Activated CD8-positive, alpha-beta memory T cell treated with anti-CD3 and anti-CD28 coated beads, Interleukin-2, amount 10 ng/mL, durations not matched to agents 7 days and 5 days (primary cell): ENCODE measurements at regions of chr18 and their contacts with region 1.

Region 1: GRCh38 chr18:56650944-56651770 is at the start of gene WDR7:
- DNase-seq: peak; percentile 98
- ATAC-seq: peak; percentile 92
- H3K4me3 Mint-ChIP-seq: peak within 1 kb of the TSS; percentile 90
- H3K27ac Mint-ChIP-seq: peak within 1 kb of the TSS; percentile 92
- H3K4me1 Mint-ChIP-seq: peaks cover 73% of the 10 kb centered on the region
- H3K27me3 Mint-ChIP-seq: no peaks in the 10 kb centered on the region
- total RNA-seq, gene WDR7: 35.9 to 43.3 TPM

Region 2: DNA sequence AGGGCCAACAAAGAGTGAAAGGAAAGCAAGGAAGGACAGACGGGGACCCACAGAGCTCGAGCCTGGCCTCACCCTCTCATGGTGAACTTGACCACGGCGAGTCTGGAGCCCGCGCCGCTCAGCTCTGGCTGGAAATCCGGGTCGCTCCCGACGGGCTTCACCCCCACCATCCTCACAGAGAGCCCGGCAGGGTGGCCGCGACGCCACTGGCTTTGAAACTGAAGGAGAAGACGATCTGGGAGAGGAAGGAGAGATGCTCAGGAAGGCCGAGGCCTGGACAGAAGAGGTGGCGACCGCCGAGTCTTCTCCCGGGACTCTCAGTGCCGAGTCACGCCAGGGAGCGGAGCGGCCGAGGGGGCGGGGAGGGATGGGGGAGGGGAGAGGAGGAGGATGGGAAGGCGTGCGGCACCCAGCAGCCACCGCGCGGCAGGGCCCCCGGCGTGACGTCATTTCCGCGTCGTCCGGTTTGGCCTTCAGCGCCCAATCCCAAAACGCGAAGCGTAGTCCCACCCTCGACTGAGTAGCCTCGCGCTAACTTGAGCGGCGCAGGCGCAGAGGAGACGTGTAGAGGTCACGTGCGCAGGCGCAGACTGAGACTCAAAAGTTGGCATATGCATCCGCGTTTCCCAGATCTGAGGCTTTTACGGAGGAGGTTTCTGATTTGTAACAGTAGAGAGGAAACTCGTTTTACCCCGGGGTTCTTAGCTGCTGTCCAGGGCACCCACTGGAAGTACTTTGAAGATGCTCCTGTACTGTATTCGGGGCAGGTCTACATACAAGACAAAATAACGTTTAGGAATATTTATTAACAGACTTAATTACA is 12.7 kb before region 1 on chr18 and contains the start of gene TXNL1:
- CTCF ChIA-PET with region 1: interaction called, 16 read pairs
- DNase-seq: peak; percentile 99
- ATAC-seq: peak; percentile 97
- H3K4me3 Mint-ChIP-seq: peak within 1 kb of the TSS; percentile 97
- H3K27ac Mint-ChIP-seq: peak within 1 kb of the TSS; percentile 94
- H3K4me1 Mint-ChIP-seq: peaks cover 39% of the 10 kb centered on the region
- H3K27me3 Mint-ChIP-seq: no peaks in the 10 kb centered on the region
- total RNA-seq, gene TXNL1: 42.5 to 61.2 TPM

Region 3: DNA sequence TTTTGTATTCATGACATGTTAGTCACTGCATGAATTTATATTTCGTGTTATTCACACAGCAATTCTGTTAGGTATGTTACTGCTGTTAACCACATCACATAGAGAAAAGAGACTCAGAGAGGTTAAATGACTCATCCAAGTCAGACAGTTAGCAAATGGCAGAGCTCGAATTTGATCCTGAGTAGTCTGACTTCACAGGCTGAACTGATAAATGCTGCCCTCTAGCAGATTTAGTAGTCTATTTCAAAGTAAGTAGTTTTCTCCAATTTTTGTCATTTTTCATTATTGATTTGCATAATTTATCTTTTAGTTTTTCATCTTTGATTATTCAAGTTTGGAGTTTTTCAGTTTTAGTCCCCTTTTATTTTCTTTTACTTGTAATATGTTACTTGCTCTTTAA is 58.3 kb after region 1 on chr18:
- CTCF ChIA-PET with region 1: interaction called, 10 read pairs
- DNase-seq: peak; percentile 57
- ATAC-seq: peak; percentile 100
- H3K4me3 Mint-ChIP-seq: no peak overlapping the region
- H3K27ac Mint-ChIP-seq: no peak overlapping the region
- H3K4me1 Mint-ChIP-seq: peaks cover 10% of the 10 kb centered on the region
- H3K27me3 Mint-ChIP-seq: no peaks in the 10 kb centered on the region

Region 4: DNA sequence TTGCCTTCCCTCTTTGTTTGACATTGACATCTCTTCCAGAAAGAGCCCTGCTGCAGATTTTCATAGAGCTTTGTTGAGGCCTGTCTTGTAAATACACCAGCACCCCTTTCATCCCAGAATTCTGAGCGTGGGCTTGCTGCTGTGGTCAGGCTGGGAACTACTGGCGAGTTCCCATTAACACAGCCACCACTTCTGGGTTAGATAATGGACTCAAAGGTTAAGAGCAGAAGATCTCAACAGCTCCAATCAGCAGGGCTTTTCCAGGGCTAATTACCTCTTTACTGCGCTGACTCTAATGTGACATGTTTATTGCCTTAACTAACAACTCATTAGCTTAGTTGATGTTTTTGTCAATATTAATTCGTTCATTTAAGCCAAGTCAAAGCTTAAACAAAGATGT is 259.8 kb after region 1 on chr18:
- CTCF ChIA-PET with region 1: no interaction called
- DNase-seq: no peak
- ATAC-seq: no peak
- H3K4me3 Mint-ChIP-seq: no peak overlapping the region
- H3K27ac Mint-ChIP-seq: no peak overlapping the region
- H3K4me1 Mint-ChIP-seq: no peaks in the 10 kb centered on the region
- H3K27me3 Mint-ChIP-seq: no peaks in the 10 kb centered on the region